Activated CD4-positive, alpha-beta T cell treated with anti-CD3 and anti-CD28 coated beads for 36 hours (primary cell): ENCODE measurements at regions of chr4 and their contacts with region 1.

Region 1: DNA sequence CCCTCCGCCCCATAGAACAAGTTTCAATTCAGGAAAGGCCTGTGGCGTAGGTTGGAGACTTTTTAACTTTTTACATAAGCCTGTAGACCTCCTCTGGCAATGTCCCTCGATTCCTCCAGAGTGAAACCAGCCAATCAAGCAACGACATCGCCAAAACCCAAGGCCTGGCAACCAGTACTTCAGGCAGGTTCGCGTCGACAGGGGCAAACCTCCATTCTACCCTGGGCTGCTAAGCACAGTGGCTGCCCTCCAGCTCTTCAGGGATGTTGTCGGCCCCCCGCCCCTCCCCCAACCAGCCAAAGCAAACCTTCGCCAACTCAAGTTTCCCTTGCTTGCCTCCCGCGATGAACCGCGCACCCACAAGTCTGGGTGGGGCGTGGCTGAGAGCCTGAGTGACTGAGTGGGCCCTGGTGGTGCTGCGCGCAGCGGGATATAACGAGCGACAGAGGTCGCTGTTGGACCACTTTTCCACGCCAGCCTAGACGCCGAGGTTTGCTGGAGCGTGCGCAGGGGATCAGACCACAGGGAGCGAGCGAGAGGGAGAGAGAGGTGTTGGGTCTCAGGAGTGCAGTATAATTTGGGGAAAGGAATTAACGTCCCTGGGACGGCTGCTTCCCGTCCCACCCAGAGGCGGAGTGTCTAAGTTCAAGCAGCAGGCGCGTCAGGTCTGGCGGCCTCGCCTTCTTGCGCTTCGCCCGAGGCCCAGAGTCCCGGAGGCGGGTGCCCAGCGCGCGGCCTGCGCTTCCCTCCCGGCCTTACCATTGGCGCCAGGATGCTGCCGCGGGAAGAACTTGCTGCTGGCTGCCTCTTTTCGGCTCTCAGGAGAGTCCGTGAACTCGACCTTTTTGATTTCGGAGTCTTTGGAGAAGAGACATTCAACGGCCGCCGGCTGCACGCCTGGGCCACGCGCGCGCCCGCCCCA is 9.0 kb upstream of the PITX2 start:
- DNase-seq: peak; percentile 81
- ATAC-seq: peak; percentile 95
- H3K4me3 Mint-ChIP-seq: peak overlapping the region; percentile 25
- H3K27ac Mint-ChIP-seq: no peak overlapping the region
- H3K4me1 Mint-ChIP-seq: peaks cover 13% of the 10 kb centered on the region
- H3K27me3 Mint-ChIP-seq: peaks cover 80% of the 10 kb centered on the region

Region 2: GRCh38 chr4:110754726-110755125 is 122.9 kb after region 1 on chr4:
- CTCF ChIA-PET with region 1: no interaction called
- POLR2A ChIA-PET with region 1: no interaction called
- intact Hi-C with region 1: no loop called
- DNase-seq: no peak
- ATAC-seq: no peak
- H3K4me3 Mint-ChIP-seq: no peak overlapping the region
- H3K27ac Mint-ChIP-seq: no peak overlapping the region
- H3K4me1 Mint-ChIP-seq: no peaks in the 10 kb centered on the region
- H3K27me3 Mint-ChIP-seq: no peaks in the 10 kb centered on the region

Region 3: GRCh38 chr4:110823251-110823650 is 191.4 kb after region 1 on chr4:
- CTCF ChIA-PET with region 1: no interaction called
- POLR2A ChIA-PET with region 1: no interaction called
- intact Hi-C with region 1: loop called in 1 of 2 experiments (anchors 10 kb)
- DNase-seq: no peak
- ATAC-seq: no peak
- H3K4me3 Mint-ChIP-seq: no peak overlapping the region
- H3K27ac Mint-ChIP-seq: no peak overlapping the region
- H3K4me1 Mint-ChIP-seq: no peaks in the 10 kb centered on the region
- H3K27me3 Mint-ChIP-seq: no peaks in the 10 kb centered on the region

Region 4: DNA sequence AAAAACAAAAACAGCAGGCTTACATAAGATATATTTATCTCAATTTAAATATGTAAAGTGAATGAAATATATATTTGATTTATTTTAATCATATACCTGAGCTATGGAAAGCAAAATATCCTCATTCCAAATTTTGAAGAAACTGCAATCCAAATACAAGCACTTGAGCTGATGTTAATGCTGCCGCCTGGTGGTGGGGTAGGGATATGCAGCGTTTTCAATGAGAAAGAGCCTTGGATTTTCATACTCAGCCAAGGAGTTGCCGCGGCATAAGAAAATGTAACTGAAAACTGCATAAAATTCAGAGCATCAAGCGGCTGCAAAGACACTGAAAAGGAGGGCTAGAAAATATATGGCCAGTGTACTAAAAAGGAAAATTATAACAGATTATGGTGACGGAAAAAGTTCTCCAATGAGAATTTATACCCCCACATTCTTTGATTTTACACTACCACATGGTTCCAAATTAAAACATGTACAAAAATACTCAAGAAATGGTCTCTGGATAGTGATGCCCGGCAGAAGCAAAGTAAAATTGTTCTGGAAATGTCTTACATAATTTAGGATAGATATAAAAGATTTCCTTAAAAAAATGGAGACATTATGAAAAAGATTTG is 651.3 kb after region 1 on chr4:
- CTCF ChIA-PET with region 1: interaction called, 3 read pairs
- POLR2A ChIA-PET with region 1: no interaction called
- intact Hi-C with region 1: loop called (anchors 1 to 2 kb)
- DNase-seq: peak; percentile 71
- ATAC-seq: no peak
- H3K4me3 Mint-ChIP-seq: no peak overlapping the region
- H3K27ac Mint-ChIP-seq: no peak overlapping the region
- H3K4me1 Mint-ChIP-seq: no peaks in the 10 kb centered on the region
- H3K27me3 Mint-ChIP-seq: peaks cover 4% of the 10 kb centered on the region

Region 5: DNA sequence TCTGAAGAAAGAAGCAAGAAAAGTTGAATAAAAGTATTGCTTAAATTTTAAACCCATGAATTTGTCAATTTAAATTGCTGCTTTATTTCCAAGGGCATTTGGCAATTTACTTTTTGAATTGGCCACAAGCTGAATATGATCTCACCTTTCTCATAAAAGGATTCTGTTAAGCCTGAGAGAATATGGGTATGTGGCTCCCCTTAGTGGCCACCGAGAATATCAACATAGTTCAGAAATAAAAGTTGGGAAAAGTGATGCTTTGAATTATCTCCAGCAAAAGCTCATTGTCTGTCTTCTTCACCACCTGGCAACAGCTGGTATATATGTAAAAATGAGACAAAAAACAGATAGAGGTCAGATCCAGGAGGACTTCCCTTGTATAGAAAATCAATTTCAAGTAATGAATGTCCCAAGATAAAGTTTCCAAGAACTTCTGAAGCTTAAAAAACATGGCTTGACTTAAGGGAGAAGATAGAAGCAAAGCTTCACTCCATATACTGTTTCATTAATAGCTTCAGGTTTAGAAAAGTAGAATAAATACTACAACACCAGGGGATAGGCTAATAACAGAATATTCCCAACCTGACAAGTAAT is 1222.7 kb after region 1 on chr4:
- CTCF ChIA-PET with region 1: no interaction called
- POLR2A ChIA-PET with region 1: no interaction called
- intact Hi-C with region 1: loop called (anchors 2 to 10 kb)
- DNase-seq: peak; percentile 37
- ATAC-seq: peak; percentile 55
- H3K4me3 Mint-ChIP-seq: no peak overlapping the region
- H3K27ac Mint-ChIP-seq: no peak overlapping the region
- H3K4me1 Mint-ChIP-seq: no peaks in the 10 kb centered on the region
- H3K27me3 Mint-ChIP-seq: no peaks in the 10 kb centered on the region